PC-9 (cell line): ENCODE measurements at regions of chr3 and their contacts with region 1.

Region 1: DNA sequence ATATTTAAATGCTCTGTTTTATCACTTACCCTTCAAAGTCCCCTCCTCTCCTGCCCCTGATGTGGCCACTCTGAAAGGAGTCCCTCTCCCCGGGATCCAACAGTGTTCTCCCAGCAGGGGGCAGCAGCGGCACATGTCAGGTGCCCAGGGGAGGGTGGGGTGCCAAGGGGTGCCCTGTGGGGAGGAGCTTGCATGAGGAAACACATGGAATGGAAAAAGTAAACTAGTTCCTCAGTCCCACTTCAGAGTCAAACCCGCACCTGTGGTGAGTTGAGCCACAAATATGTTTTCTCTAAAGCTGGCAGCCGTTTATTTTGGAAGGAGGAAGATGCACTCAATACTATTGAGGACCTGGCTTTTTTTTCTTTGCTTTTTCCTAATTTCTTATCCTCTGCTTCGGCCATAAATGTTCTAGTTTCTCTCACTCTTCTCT is 30.1 kb upstream of the NRROS start:
- DNase-seq: peak; percentile 86 to 93
- H3K4me3 ChIP-seq: no peak overlapping the region
- H3K27ac ChIP-seq: peak overlapping the region; percentile 12
- H3K4me1 ChIP-seq: peaks cover 28% of the 10 kb centered on the region
- H3K27me3 ChIP-seq: no peaks in the 10 kb centered on the region
- CTCF ChIP-seq: peak; percentile 100

Region 2: GRCh38 chr3:196513697-196514349 is 95.5 kb before region 1 on chr3:
- CTCF ChIA-PET with region 1: interaction called, 10 read pairs
- POLR2A ChIA-PET with region 1: no interaction called
- intact Hi-C with region 1: no loop called
- DNase-seq: no peak
- H3K4me3 ChIP-seq: no peak overlapping the region
- H3K27ac ChIP-seq: no peak overlapping the region
- H3K4me1 ChIP-seq: peaks cover 8% of the 10 kb centered on the region
- H3K27me3 ChIP-seq: no peaks in the 10 kb centered on the region
- CTCF ChIP-seq: no peak

Region 3: GRCh38 chr3:196684548-196685407 is 75.4 kb after region 1 on chr3:
- CTCF ChIA-PET with region 1: interaction called, 15 read pairs
- POLR2A ChIA-PET with region 1: no interaction called
- intact Hi-C with region 1: loop called (anchors 1 kb)
- DNase-seq: peak; percentile 45 to 69
- H3K4me3 ChIP-seq: no peak overlapping the region
- H3K27ac ChIP-seq: no peak overlapping the region
- H3K4me1 ChIP-seq: 0 out of 2 replicates have a peak, but pooled peaks cover 9% of the 10 kb centered on the region
- H3K27me3 ChIP-seq: no peaks in the 10 kb centered on the region
- CTCF ChIP-seq: peak; percentile 97

Region 4: GRCh38 chr3:196793235-196793641 is 183.9 kb after region 1 on chr3:
- CTCF ChIA-PET with region 1: interaction called, 3 read pairs
- POLR2A ChIA-PET with region 1: no interaction called
- intact Hi-C with region 1: loop called (anchors 5 kb)
- DNase-seq: peak; percentile 80 to 100
- H3K4me3 ChIP-seq: peak overlapping the region; percentile 37; the same call in 1 of the 2 replicates
- H3K27ac ChIP-seq: peak overlapping the region; percentile 92
- H3K4me1 ChIP-seq: peaks cover 81% of the 10 kb centered on the region
- H3K27me3 ChIP-seq: no peaks in the 10 kb centered on the region
- CTCF ChIP-seq: no peak

Region 5: GRCh38 chr3:196969660-196970546 is 360.5 kb after region 1 on chr3:
- CTCF ChIA-PET with region 1: interaction called, 7 read pairs
- POLR2A ChIA-PET with region 1: no interaction called
- intact Hi-C with region 1: loop called (anchors 1 kb)
- DNase-seq: peak in 1 of 2 experiments; percentile 80
- H3K4me3 ChIP-seq: peak overlapping the region; percentile 73; the same call in 1 of the 2 replicates
- H3K27ac ChIP-seq: no peak overlapping the region
- H3K4me1 ChIP-seq: no peaks in the 10 kb centered on the region
- H3K27me3 ChIP-seq: peaks cover 22% of the 10 kb centered on the region
- CTCF ChIP-seq: peak; percentile 72

Region 6: DNA sequence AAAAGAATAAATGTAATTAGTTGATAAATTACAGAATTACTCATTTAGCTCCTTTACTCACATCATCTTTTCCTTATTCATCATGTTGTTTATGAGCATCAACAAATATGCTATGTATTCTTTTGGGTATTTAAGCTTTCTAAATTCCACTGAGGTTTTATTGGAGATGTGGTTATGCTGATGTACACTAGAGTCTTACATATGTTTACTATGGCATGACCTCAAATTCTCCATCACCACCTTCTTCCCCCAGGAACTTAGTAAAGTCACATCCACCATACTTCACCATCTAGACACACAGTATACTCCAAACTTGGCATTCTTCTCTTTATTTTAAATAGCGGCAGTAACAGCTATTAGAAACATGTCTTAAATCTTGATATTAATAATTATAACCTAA is 494.4 kb after region 1 on chr3:
- CTCF ChIA-PET with region 1: no interaction called
- POLR2A ChIA-PET with region 1: no interaction called
- intact Hi-C with region 1: no loop called
- DNase-seq: no peak
- H3K4me3 ChIP-seq: no peak overlapping the region
- H3K27ac ChIP-seq: no peak overlapping the region
- H3K4me1 ChIP-seq: no peaks in the 10 kb centered on the region
- H3K27me3 ChIP-seq: no peaks in the 10 kb centered on the region
- CTCF ChIP-seq: no peak